Caco-2 (cell line): ENCODE measurements at regions of chr12 and their contacts with region 1.

Region 1: DNA sequence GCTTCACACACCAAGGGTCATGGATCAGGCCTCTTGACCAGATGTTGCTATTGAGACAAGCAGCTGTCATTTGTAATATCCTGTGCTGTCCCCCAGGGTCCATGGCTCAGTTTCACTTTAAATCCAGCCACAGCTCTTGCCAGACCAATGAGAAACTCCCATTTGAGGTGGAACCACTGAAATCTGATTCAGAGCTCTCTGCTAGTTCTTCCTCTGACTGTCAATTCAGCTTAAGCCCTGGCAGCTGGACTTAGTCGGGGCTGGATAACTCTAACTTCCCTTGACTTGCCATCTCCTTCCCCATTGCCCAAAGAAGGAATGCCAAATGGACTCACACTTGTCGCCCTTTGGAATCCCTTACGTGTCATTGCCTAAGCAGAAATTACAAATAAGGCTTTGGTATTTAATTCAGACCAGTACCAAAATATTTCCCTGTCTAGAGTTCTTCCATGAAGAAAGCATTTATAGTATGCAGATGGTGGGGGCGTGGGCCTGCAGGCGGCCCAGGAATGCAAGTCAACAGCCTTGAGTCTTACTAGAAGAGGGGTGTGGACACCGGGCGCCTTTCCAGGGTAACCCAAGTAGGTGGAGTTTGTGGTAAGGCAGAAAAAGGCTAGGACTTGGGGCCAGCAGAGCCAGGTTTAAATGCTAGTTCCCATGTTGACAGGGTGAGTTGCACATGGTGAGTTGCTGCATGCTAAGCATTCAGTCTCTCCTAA is 96.9 kb upstream of the TMPO start:
- DNase-seq: peak; percentile 76 to 84
- H3K4me3 ChIP-seq: no peak overlapping the region
- H3K4me3 Mint-ChIP-seq: no peak overlapping the region
- H3K27ac Mint-ChIP-seq: peak overlapping the region; percentile 45
- H3K4me1 ChIP-seq: peaks cover 17% of the 10 kb centered on the region
- H3K4me1 Mint-ChIP-seq: peaks cover 28% of the 10 kb centered on the region
- H3K27me3 ChIP-seq: no peaks in the 10 kb centered on the region
- H3K27me3 Mint-ChIP-seq: no peaks in the 10 kb centered on the region
- CTCF ChIP-seq: no peak

Region 2: DNA sequence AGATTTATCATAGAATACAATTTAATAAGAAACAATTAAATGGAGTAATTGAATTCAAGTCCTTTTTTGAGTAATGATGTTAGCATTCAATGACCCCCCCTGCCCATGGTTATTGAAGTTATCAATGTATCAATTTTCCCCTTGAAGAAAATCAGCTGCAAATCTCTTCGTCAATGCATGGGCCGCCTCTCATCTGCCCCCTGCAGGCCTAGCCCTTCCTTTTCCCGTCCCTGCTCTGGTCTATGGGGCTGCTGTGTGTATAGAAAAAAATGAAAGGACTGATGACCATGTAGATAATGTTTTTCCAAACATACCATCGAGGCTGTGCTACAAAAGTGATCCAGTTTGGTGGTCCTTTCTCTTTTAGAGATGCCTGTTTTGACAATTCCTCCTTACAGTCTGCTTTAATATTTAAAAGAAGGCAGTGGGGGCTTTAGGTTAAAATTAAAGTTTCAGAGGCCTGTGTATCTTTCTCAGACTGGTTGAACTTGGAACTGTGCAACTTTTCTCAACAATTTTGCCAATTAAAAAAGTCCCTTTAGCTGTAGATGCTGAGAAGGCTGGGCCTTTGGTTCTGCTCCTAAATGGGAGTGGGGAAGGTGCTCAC is 324.9 kb after region 1 on chr12:
- CTCF ChIA-PET with region 1: no interaction called
- POLR2A ChIA-PET with region 1: no interaction called
- intact Hi-C with region 1: loop called (anchors 1 kb)
- DNase-seq: peak in 1 of 2 experiments; percentile 58
- H3K4me3 ChIP-seq: no peak overlapping the region
- H3K4me3 Mint-ChIP-seq: no peak overlapping the region
- H3K27ac Mint-ChIP-seq: no peak overlapping the region
- H3K4me1 ChIP-seq: no peaks in the 10 kb centered on the region
- H3K4me1 Mint-ChIP-seq: peaks cover 6% of the 10 kb centered on the region
- H3K27me3 ChIP-seq: no peaks in the 10 kb centered on the region
- H3K27me3 Mint-ChIP-seq: peaks cover 32% of the 10 kb centered on the region
- CTCF ChIP-seq: peak; percentile 51 to 79